Activated T-helper 1 cell treated with anti-CD3 and anti-CD28 coated beads, Interleukin-12 subunit alpha, Interleukin-12 subunit beta, Interleukin-2, Interleukin-4 antibody, amounts not matched to agents 30 ng/mL and 10 ng/mL and 1 ng/mL, durations not matched to agents 14 hours and 24 hours and 36 hours (primary cell): ENCODE measurements at regions of chr1 and their contacts with region 1.

Region 1: GRCh38 chr1:174217787-174218574 is 58.7 kb downstream of the RABGAP1L start:
- DNase-seq: no peak
- H3K4me3 Mint-ChIP-seq: no peak overlapping the region
- H3K27ac Mint-ChIP-seq: no peak overlapping the region
- H3K4me1 Mint-ChIP-seq: no peaks in the 10 kb centered on the region
- H3K27me3 Mint-ChIP-seq: no peaks in the 10 kb centered on the region

Region 2: GRCh38 chr1:173420330-173420806 is 797.6 kb before region 1 on chr1:
- intact Hi-C with region 1: loop called (anchors 5 kb)
- DNase-seq: peak; percentile 42
- H3K4me3 Mint-ChIP-seq: no peak overlapping the region
- H3K27ac Mint-ChIP-seq: no peak overlapping the region
- H3K4me1 Mint-ChIP-seq: peaks cover 13% of the 10 kb centered on the region
- H3K27me3 Mint-ChIP-seq: no peaks in the 10 kb centered on the region

Region 3: GRCh38 chr1:173954179-173954578 is 263.8 kb before region 1 on chr1:
- intact Hi-C with region 1: loop called (anchors 10 kb)
- DNase-seq: no peak
- H3K4me3 Mint-ChIP-seq: no peak overlapping the region
- H3K27ac Mint-ChIP-seq: peak overlapping the region; percentile 59
- H3K4me1 Mint-ChIP-seq: peaks cover 24% of the 10 kb centered on the region
- H3K27me3 Mint-ChIP-seq: no peaks in the 10 kb centered on the region

Region 4: DNA sequence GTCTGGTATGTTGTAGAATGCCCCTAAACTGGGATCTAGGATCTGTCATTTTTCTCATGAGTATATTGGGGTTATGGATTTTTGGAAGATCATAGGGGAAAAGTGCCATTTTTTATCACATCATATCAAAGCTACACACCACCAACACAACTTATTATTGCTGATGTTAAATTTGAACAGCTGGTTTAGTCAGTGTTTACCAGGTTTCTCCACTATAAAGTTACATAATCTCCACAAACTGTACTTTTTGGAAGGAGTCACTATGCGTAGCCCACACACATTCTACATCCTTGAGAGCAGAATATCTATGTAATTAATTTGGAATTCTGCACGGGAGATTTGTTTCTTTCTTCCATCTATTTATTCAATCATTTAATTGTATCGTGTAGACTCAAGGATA is 231.0 kb before region 1 on chr1:
- intact Hi-C with region 1: loop called (anchors 5 kb)
- DNase-seq: no peak
- H3K4me3 Mint-ChIP-seq: no peak overlapping the region
- H3K27ac Mint-ChIP-seq: no peak overlapping the region
- H3K4me1 Mint-ChIP-seq: no peaks in the 10 kb centered on the region
- H3K27me3 Mint-ChIP-seq: no peaks in the 10 kb centered on the region